IMR-90 (cell line): ENCODE measurements at regions of chr6 and their contacts with region 1.

Region 1: DNA sequence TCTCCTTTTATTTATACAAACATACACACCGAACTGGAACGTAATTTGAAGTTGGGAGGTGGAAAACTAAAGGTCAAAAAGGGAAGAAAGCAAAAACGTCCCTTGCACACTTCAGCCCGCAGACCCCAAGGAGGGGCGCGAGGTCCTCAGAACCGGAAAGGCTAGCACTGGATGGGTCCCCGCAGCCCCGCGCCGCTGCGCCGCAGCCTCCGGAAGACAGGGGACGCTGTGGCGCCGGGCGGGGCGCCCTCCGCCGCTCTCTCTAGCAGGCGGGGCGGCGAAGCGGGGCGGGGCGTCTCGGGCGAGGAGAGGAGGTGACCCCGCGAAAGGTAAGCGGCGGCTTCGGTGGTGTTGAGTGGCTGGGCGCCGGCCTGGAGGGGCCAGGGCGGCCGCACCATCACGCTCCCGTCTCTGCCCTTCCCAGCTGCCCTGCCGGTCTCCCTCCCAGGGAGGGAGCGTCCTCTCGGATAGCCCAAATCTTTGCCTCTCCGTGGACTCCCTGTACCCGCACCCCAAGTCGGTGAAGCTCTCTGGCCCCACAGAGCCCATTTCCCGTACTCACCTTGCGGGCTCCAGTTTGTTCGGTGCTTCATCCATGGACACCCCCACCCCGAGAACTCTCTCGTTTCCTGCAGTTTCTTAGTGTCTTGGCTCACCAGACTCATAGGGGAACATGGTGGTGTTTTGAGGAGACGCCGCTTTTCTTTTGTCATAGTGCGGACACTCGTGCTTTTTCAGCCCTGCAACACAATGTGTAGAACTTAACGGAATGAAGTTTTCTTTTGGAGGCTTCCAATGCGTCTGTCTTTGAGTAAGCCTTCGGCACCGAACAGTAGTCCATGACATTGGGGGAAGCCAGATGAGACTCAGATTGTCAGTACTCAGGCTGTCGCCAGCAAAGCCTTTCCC is at the start of gene SMIM8:
- DNase-seq: peak; percentile 58
- ATAC-seq: peak; percentile 100
- H3K4me3 ChIP-seq: peak within 1 kb of the TSS; percentile 91
- H3K27ac ChIP-seq: peak within 1 kb of the TSS; percentile 26; the same call in 1 of the 2 replicates
- H3K4me1 ChIP-seq: no peaks in the 10 kb centered on the region
- H3K27me3 ChIP-seq: no peaks in the 10 kb centered on the region
- CTCF ChIP-seq: peak; percentile 97
- POLR2A ChIP-seq: no peak
- RAD21 ChIP-seq: peak; percentile 28; the same call in 1 of the 2 replicates
- total RNA-seq, gene SMIM8: 3.6 and 5.3 TPM in 2 replicates

Region 2: GRCh38 chr6:87139236-87139635 is 183.3 kb before region 1 on chr6:
- CTCF ChIA-PET with region 1: no interaction called
- POLR2A ChIA-PET with region 1: no interaction called
- dilution Hi-C with region 1: no loop called
- in situ Hi-C with region 1: no loop called
- intact Hi-C with region 1: loop called (anchors 5 kb)
- DNase-seq: peak; percentile 62
- ATAC-seq: peak; percentile 79
- H3K4me3 ChIP-seq: no peak overlapping the region
- H3K27ac ChIP-seq: no peak overlapping the region
- H3K4me1 ChIP-seq: no peaks in the 10 kb centered on the region
- H3K27me3 ChIP-seq: peaks cover 2% of the 10 kb centered on the region
- CTCF ChIP-seq: peak; percentile 71
- POLR2A ChIP-seq: no peak
- RAD21 ChIP-seq: peak; percentile 81

Region 3: GRCh38 chr6:87297115-87297514 is 25.4 kb before region 1 on chr6:
- CTCF ChIA-PET with region 1: interaction called, 3 read pairs
- POLR2A ChIA-PET with region 1: interaction called, 25 read pairs
- dilution Hi-C with region 1: no loop called
- in situ Hi-C with region 1: no loop called
- intact Hi-C with region 1: no loop called
- DNase-seq: peak; percentile 45
- ATAC-seq: peak; percentile 48
- H3K4me3 ChIP-seq: no peak overlapping the region
- H3K27ac ChIP-seq: no peak overlapping the region
- H3K4me1 ChIP-seq: no peaks in the 10 kb centered on the region
- H3K27me3 ChIP-seq: peaks cover 10% of the 10 kb centered on the region
- CTCF ChIP-seq: no peak
- POLR2A ChIP-seq: no peak
- RAD21 ChIP-seq: no peak